Psoas muscle (tissue), 8 donors: ENCODE measurements at regions of chr1 and their contacts with region 1.

Region 1: GRCh38 chr1:39189592-39190041 is 14.9 kb upstream of the MACF1 start:
- DNase-seq: no peak
- ATAC-seq: no peak
- H3K4me3 ChIP-seq: no peak overlapping the region
- H3K27ac ChIP-seq: peak overlapping the region; percentile 19
- H3K4me1 ChIP-seq: peaks cover 48% of the 10 kb centered on the region
- H3K27me3 ChIP-seq: no peaks in the 10 kb centered on the region
- CTCF ChIP-seq: no peak

Region 2: DNA sequence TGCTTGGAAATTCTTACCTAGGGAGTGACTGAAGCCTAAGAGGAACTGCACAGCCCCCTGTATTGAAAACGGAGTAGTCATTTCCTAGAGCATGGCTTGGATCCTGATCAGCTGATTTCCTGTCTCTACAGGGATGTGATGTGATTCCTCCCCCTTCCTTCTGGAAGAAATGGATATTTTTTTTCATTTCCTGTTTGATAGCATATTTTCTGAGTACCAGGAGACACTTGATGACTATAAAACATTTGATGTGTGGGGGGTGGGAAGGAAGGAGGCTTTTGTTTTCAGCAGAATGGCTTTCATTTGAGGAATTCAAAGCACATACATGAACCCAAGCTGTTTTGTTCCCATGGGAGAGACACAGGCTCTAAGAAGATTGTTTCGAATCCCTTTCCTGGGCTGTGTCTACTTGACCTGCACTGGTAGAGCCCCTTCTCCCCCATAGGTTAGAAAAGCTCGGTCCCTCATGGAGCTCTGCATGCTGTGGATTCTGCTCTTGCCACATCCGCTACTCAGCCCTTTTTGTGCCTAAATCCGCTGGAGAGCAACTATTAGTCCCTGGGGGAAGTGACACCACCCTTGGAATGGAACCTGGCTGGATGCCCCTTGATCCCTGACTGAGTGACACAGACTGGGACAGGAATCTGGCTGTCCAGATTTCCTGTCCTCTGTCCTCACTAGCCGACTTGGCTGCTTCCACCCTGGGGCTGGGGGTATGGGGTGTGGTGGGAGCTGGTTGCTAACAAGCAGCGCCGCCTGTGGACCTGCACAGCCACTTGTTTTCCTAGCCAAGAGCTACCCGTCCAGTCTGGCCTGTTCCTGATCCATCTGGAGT is 56.9 kb before region 1 on chr1:
- intact Hi-C with region 1: loop called in 1 of 2 experiments (anchors 2 kb)
- DNase-seq: peak; percentile 61 to 82
- ATAC-seq: peak; percentile 65 to 78 (median 74)
- H3K4me3 ChIP-seq: no peak overlapping the region
- H3K27ac ChIP-seq: peak overlapping the region; percentile 69
- H3K4me1 ChIP-seq: peaks cover 57% of the 10 kb centered on the region
- H3K27me3 ChIP-seq: no peaks in the 10 kb centered on the region
- CTCF ChIP-seq: peak; percentile 30